ENCODE measurements at regions of chr6 and their contacts with region 1.

Region 1: GRCh38 chr6:159174263-159174969 is 5.2 kb downstream of the FNDC1 start:
- DNase-seq: peak; percentile 82
- H3K4me3 ChIP-seq: peak overlapping the region in 1 of 2 experiments; percentile 48; a peak in 1 of 4 replicates
- H3K27ac ChIP-seq: no peak overlapping the region
- H3K4me1 ChIP-seq: peaks cover 0 to 2% of the 10 kb centered on the region in 2 experiments; a peak in 1 of 4 replicates
- H3K27me3 ChIP-seq: peaks cover 61% of the 10 kb centered on the region
- CTCF ChIP-seq: peak; percentile 98
- EP300 ChIP-seq: no peak
- RAD21 ChIP-seq: peak; percentile 92

Region 2: DNA sequence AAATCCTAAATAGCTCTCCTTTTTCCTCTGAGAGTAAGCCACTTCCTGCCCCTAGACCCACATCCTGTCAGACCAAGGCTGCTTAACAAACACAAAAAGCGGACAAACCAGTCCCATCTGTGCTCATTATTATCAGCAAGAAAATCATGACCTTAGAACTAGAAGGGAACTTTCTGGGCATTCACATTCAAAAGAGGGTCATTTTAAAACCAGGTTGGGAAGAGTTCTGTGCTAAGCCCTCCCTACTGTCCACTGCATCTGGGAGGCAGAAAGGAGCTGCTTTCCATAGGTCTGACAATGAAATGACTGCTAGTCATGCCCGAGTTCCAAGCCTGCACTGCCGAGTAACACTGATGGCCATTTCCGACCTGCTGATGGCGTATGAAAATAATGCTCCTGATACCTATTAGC is 370.7 kb before region 1 on chr6:
- CTCF ChIA-PET with region 1: no interaction called
- POLR2A ChIA-PET with region 1: no interaction called
- DNase-seq: no peak
- H3K4me3 ChIP-seq: no peak overlapping the region
- H3K27ac ChIP-seq: peak overlapping the region; percentile 40 to 65; a peak in 3 of 4 replicates
- H3K4me1 ChIP-seq: peaks cover 18 to 28% of the 10 kb centered on the region in 2 experiments; a peak in 3 of 4 replicates
- H3K27me3 ChIP-seq: no peaks in the 10 kb centered on the region
- CTCF ChIP-seq: no peak
- EP300 ChIP-seq: no peak
- RAD21 ChIP-seq: no peak

Region 3: GRCh38 chr6:159151266-159151855 is 23.1 kb before region 1 on chr6:
- CTCF ChIA-PET with region 1: interaction called, 32 read pairs
- POLR2A ChIA-PET with region 1: no interaction called
- DNase-seq: peak; percentile 60
- H3K4me3 ChIP-seq: no peak overlapping the region
- H3K27ac ChIP-seq: no peak overlapping the region
- H3K4me1 ChIP-seq: no peaks in the 10 kb centered on the region
- H3K27me3 ChIP-seq: peaks cover 24% of the 10 kb centered on the region; the same call in 1 of the 2 replicates
- CTCF ChIP-seq: peak; percentile 85
- EP300 ChIP-seq: no peak
- RAD21 ChIP-seq: peak; percentile 32; the same call in 1 of the 2 replicates

Region 4: GRCh38 chr6:159184559-159184958 is 10.1 kb after region 1 on chr6:
- CTCF ChIA-PET with region 1: interaction called, 49 read pairs
- POLR2A ChIA-PET with region 1: no interaction called
- DNase-seq: no peak
- H3K4me3 ChIP-seq: no peak overlapping the region
- H3K27ac ChIP-seq: no peak overlapping the region
- H3K4me1 ChIP-seq: no peaks in the 10 kb centered on the region
- H3K27me3 ChIP-seq: no peaks in the 10 kb centered on the region; the same call in 1 of the 2 replicates
- CTCF ChIP-seq: no peak
- EP300 ChIP-seq: no peak
- RAD21 ChIP-seq: no peak

Region 5: GRCh38 chr6:159212028-159212427 is 37.6 kb after region 1 on chr6:
- CTCF ChIA-PET with region 1: interaction called, 29 read pairs
- POLR2A ChIA-PET with region 1: no interaction called
- DNase-seq: no peak
- H3K4me3 ChIP-seq: no peak overlapping the region
- H3K27ac ChIP-seq: no peak overlapping the region
- H3K4me1 ChIP-seq: peaks cover 0 to 2% of the 10 kb centered on the region in 2 experiments; a peak in 1 of 4 replicates
- H3K27me3 ChIP-seq: peaks cover 19% of the 10 kb centered on the region; the same call in 1 of the 2 replicates
- CTCF ChIP-seq: no peak
- EP300 ChIP-seq: no peak
- RAD21 ChIP-seq: no peak

Region 6: GRCh38 chr6:159463119-159463829 is 288.9 kb after region 1 on chr6:
- CTCF ChIA-PET with region 1: interaction called, 85 read pairs
- POLR2A ChIA-PET with region 1: no interaction called
- DNase-seq: peak; percentile 31
- H3K4me3 ChIP-seq: no peak overlapping the region
- H3K27ac ChIP-seq: no peak overlapping the region
- H3K4me1 ChIP-seq: no peaks in the 10 kb centered on the region
- H3K27me3 ChIP-seq: peaks cover 16% of the 10 kb centered on the region; the same call in 1 of the 2 replicates
- CTCF ChIP-seq: peak; percentile 60
- EP300 ChIP-seq: no peak
- RAD21 ChIP-seq: peak; percentile 69

Region 7: GRCh38 chr6:159654483-159655098 is 480.2 kb after region 1 on chr6:
- CTCF ChIA-PET with region 1: interaction called, 53 read pairs
- POLR2A ChIA-PET with region 1: no interaction called
- DNase-seq: peak; percentile 41
- H3K4me3 ChIP-seq: no peak overlapping the region
- H3K27ac ChIP-seq: no peak overlapping the region
- H3K4me1 ChIP-seq: no peaks in the 10 kb centered on the region
- H3K27me3 ChIP-seq: no peaks in the 10 kb centered on the region
- CTCF ChIP-seq: peak; percentile 78
- EP300 ChIP-seq: no peak
- RAD21 ChIP-seq: peak; percentile 75

Measured in SK-N-SH (cell line).